K562 (cell line): ENCODE measurements at regions of chr5 and their contacts with region 1.

Region 1: GRCh38 chr5:14644623-14645237 is 19.8 kb upstream of the OTULIN start:
- DNase-seq: no peak
- ATAC-seq: no peak
- H3K4me3 ChIP-seq: no peak overlapping the region
- H3K27ac ChIP-seq: no peak overlapping the region
- H3K4me1 ChIP-seq: no peaks in the 10 kb centered on the region
- H3K27me3 ChIP-seq: peaks cover 0 to 8% of the 10 kb centered on the region in 2 experiments; a peak in 2 of 5 replicates
- CTCF ChIP-seq: no peak
- EP300 ChIP-seq: no peak
- POLR2A ChIP-seq: no peak
- RAD21 ChIP-seq: no peak

Region 2: GRCh38 chr5:14364576-14365472 is 279.9 kb before region 1 on chr5:
- CTCF ChIA-PET with region 1: interaction called, 33 read pairs
- POLR2A ChIA-PET with region 1: no interaction called
- in situ Hi-C with region 1: no loop called
- intact Hi-C with region 1: loop called (anchors 1 kb)
- DNase-seq: peak; percentile 32 to 62 (median 57)
- ATAC-seq: peak; percentile 87
- H3K4me3 ChIP-seq: no peak overlapping the region
- H3K27ac ChIP-seq: no peak overlapping the region
- H3K4me1 ChIP-seq: no peaks in the 10 kb centered on the region
- H3K27me3 ChIP-seq: peaks cover 1 to 28% of the 10 kb centered on the region in 2 experiments; a peak in 4 of 5 replicates
- CTCF ChIP-seq: peak; percentile 71 to 87 (median 72)
- EP300 ChIP-seq: no peak
- POLR2A ChIP-seq: no peak
- RAD21 ChIP-seq: peak; percentile 3 to 53; a peak in 2 of 4 replicates

Region 3: DNA sequence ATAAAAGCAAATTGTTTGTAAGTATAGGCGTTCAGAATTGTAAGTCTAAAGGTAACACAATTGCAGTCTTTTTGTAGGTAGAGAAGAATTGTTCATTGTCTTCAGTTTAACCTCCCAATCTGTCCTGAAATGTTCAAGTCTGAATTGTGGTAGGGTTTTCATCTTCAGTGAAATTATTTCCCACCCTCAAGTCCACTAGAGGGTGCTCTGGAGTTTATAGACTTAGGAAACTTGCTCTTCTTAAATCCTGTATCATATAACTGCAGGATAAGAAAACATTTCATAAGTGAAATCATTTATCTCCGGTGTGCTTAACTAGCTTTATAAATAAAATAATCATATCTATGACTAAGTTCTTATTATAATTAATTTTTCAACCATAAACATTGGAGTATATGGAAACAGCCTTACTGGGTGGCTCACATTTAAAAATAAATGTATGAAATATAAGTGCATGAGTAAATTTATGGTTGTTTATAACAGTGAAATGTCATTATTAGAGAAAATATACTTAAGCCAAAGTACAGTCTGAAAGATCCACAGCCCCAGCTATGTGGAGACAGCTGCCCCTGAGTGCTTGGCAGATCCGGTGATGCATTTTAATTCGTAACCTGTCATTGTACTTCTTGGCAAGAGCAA is 245.6 kb before region 1 on chr5:
- CTCF ChIA-PET with region 1: interaction called, 7 read pairs
- POLR2A ChIA-PET with region 1: no interaction called
- in situ Hi-C with region 1: no loop called
- intact Hi-C with region 1: loop called (anchors 1 kb)
- DNase-seq: peak; percentile 38 to 54 (median 48)
- ATAC-seq: peak; percentile 69; the same call in 2 of the 3 replicates
- H3K4me3 ChIP-seq: no peak overlapping the region
- H3K27ac ChIP-seq: no peak overlapping the region
- H3K4me1 ChIP-seq: no peaks in the 10 kb centered on the region
- H3K27me3 ChIP-seq: peaks cover 0 to 13% of the 10 kb centered on the region in 2 experiments; a peak in 2 of 5 replicates
- CTCF ChIP-seq: peak; percentile 40 to 71 (median 42); a peak in 4 of 6 replicates
- EP300 ChIP-seq: no peak
- POLR2A ChIP-seq: no peak
- RAD21 ChIP-seq: peak; percentile 52 to 68; a peak in 3 of 4 replicates